PC-9 (cell line): ENCODE measurements at regions of chr2 and their contacts with region 1.

Region 1: GRCh38 chr2:42095923-42096408 is 48.1 kb downstream of the PKDCC start:
- DNase-seq: peak; percentile 60 to 68
- H3K4me3 ChIP-seq: no peak overlapping the region
- H3K27ac ChIP-seq: no peak overlapping the region
- H3K4me1 ChIP-seq: no peaks in the 10 kb centered on the region
- H3K27me3 ChIP-seq: no peaks in the 10 kb centered on the region
- CTCF ChIP-seq: peak; percentile 98

Region 2: GRCh38 chr2:42196403-42197267 is 100.7 kb after region 1 on chr2:
- CTCF ChIA-PET with region 1: interaction called, 3 read pairs
- POLR2A ChIA-PET with region 1: no interaction called
- intact Hi-C with region 1: loop called (anchors 1 kb)
- DNase-seq: peak in 1 of 2 experiments; percentile 13
- H3K4me3 ChIP-seq: no peak overlapping the region
- H3K27ac ChIP-seq: no peak overlapping the region
- H3K4me1 ChIP-seq: peaks cover 13% of the 10 kb centered on the region
- H3K27me3 ChIP-seq: no peaks in the 10 kb centered on the region
- CTCF ChIP-seq: peak; percentile 60

Region 3: DNA sequence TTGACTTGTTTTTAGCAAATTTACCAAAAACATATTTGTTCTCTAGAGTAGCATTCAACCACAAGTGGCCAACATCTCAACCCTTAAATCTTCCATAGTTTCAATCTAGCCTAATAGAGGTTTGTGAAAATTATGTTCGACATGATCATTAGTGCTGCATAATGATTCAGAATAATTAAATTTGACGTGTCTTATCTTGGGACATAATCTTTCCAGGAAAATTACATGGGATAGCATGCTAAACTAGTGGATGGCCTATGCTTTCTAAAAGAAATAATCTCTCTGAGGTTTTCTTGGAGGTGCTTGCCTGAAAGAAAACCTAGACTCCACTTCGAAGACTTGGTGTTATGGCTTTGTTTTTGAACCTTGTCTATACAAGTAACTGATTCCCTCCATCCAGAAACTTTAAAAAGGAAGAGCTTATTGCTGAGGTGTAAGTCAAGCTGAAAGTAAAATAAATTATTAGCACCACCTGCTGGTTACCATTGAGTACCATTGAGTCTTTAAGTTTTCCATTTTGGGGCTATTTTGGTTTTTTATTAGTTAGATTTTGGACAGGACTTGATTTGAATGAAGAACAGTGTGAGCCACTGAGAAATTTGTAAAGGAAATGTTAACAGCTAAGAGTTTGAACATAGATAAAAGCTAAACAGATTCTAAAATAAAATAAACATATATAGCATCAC is 232.3 kb after region 1 on chr2:
- CTCF ChIA-PET with region 1: no interaction called
- POLR2A ChIA-PET with region 1: no interaction called
- intact Hi-C with region 1: loop called (anchors 1 kb)
- DNase-seq: no peak
- H3K4me3 ChIP-seq: no peak overlapping the region
- H3K27ac ChIP-seq: no peak overlapping the region
- H3K4me1 ChIP-seq: no peaks in the 10 kb centered on the region
- H3K27me3 ChIP-seq: no peaks in the 10 kb centered on the region
- CTCF ChIP-seq: peak; percentile 85

Region 4: DNA sequence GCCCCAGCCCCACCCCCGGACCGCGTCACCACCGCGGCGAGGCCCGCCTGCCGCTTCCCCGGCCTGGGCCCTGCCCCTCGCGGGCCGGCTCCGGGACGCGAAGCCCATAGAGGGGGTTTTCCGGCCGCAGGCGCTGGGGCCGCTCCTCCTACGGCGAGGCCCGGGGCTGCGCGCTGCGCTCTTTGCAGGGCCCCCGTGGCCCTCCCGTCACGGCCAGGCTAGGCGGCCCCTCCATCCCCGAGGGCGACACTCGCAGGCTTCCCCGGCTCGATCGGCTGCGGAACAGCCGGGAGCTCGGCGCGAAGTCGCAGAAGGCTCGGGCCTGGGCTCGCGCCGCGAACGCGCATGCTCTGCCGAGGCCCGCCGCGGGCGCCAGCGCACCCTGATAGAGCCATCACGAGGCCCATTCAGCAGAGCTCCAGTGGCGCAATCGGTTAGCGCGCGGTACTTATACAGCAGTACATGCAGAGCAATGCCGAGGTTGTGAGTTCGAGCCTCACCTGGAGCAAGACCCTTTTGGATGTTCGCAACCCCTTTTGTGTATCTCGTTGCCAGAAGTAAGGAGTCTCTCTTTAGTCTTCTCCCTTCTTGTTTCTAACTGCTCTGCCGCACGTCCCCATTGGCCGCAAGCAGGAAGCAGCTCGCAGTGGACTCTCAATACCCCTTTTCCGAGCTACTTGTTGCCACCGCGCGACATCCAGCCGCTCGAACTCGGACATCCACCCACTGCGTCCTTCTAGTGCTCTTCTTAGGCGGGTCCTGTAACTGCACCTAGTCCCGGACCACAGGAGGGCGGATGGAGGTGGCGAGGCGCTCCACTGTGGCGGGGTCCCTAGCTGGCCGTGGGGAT is 714.4 kb after region 1 on chr2:
- CTCF ChIA-PET with region 1: no interaction called
- POLR2A ChIA-PET with region 1: no interaction called
- intact Hi-C with region 1: loop called (anchors 10 kb)
- DNase-seq: peak; percentile 92 to 97
- H3K4me3 ChIP-seq: peak overlapping the region; percentile 71
- H3K27ac ChIP-seq: peak overlapping the region; percentile 82
- H3K4me1 ChIP-seq: peaks cover 9% of the 10 kb centered on the region
- H3K27me3 ChIP-seq: no peaks in the 10 kb centered on the region
- CTCF ChIP-seq: no peak

Region 5: DNA sequence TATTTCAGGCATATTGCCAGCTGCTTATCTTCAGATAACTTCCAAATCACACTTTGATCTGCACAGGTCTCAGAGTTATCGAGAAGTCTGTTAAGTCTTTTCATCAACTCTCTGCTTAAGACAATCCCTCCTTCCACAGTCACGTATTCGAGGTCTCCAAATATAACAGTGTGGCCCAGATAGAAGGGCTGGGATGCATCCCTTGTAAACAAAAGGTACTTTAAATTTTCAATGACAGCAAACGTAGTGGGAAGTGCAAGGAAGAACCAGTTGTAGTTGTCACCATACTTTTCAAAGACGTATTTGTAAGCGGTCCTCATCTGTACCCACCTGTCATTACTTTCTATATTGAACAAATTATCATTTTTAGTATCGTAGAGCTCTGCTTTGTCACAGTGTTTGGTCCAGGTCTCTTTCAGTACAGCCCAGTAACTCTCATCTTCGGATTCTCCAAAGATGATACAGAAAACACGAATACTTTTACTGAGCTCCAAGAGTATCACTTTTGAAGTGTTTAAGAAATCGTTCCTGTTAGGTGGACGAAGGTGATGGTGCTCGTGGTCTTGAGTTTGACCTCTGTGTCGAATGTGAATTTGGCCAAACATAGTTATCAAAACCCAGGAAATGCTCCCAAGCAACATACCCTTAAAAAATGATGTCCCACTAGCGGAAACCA is 1579.8 kb after region 1 on chr2:
- CTCF ChIA-PET with region 1: interaction called, 17 read pairs
- POLR2A ChIA-PET with region 1: no interaction called
- intact Hi-C with region 1: no loop called
- DNase-seq: no peak
- H3K4me3 ChIP-seq: peak overlapping the region; percentile 63
- H3K27ac ChIP-seq: no peak overlapping the region
- H3K4me1 ChIP-seq: peaks cover 15% of the 10 kb centered on the region
- H3K27me3 ChIP-seq: no peaks in the 10 kb centered on the region
- CTCF ChIP-seq: no peak